ENCODE measurements at regions of chr5 and their contacts with region 1.

Region 1: DNA sequence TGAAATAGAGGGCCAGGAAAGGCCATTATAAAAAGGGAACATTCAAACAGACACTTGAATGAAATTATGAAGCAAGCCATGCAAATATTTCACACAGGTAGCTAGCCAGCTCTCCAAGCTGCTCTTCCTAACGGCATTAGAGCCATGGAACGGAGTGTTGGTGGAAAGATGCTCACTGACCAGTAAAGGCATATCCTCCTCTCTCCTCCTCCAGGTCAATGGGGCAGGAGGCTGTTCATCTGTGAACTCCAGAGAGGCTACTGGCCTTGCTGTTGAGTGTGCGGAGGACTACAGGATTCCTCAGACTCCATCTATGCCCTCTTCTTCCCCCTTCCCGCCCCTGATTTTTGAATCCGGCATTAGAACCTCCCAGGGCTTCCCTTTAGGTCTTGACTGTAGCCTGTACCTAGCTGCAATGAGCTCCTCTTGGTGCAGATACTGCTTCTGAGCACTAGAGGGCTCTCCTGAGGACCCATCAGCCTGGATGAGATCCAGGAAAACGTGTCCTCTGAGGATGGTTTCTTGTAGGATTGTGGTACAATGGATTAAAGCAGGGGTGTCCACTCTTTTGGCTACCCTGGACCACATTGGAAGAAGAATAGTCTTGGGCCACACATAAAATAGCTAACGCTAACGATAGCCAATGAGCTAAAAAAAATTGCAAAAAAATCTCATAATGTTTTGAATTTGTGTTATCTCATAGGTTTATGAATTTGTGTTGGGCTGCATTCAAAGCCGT is 162.2 kb downstream of the SREK1 start:
- DNase-seq: no peak
- H3K4me3 Mint-ChIP-seq: no peak overlapping the region
- H3K27ac Mint-ChIP-seq: no peak overlapping the region
- H3K4me1 Mint-ChIP-seq: peaks cover 5% of the 10 kb centered on the region
- H3K27me3 Mint-ChIP-seq: peaks cover 12% of the 10 kb centered on the region

Region 2: GRCh38 chr5:66477596-66477995 is 171.3 kb after region 1 on chr5:
- intact Hi-C with region 1: no loop called
- DNase-seq: no peak
- H3K4me3 Mint-ChIP-seq: no peak overlapping the region
- H3K27ac Mint-ChIP-seq: no peak overlapping the region
- H3K4me1 Mint-ChIP-seq: no peaks in the 10 kb centered on the region
- H3K27me3 Mint-ChIP-seq: peaks cover 14% of the 10 kb centered on the region

Region 3: DNA sequence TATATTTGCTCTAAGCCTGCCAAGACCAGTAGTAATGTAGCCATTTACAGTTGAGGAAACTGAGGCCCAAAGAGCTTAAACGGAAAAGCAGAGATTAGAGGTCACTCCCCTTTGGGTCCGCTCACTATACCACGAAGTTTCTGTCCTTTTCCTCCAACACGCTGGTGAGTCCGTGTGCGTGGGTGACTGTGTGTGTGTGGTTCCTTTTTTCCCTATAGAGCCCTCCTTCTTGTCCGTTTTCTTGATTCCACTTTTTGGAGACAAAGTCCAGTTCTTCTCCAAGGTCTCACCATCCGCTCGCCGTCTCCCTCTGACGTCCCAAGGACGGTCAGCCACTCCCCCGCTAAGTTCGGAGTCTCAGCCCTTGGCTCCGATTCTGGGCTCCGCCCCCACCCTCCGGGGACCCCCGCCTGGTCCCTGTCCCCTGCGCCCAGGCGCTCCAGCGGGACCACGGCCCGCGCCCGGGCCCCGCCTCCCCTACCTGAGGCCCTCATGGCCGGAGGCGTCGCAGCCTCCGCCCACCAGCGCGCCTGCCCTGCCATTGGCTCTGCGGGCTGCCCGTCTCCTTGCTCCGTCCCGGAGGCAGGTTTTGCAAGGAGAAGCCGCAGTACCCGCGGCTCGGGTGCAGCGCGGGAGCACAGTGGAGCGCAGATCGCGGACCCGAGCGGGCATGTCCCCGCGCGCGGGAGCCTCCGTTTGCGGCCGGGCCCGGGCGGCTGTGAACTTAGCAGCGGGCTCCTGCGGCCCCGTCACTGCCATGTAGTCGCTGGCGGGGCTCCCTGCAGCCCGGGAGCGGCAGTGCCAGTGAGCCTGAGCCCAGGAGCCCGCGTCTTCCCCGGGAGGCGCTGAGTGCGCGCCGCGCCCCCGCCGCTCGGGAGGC is 289.7 kb after region 1 on chr5 and contains the start of gene MAST4:
- intact Hi-C with region 1: loop called (anchors 5 kb)
- DNase-seq: peak; percentile 80
- H3K4me3 Mint-ChIP-seq: peak within 1 kb of the TSS; percentile 87
- H3K27ac Mint-ChIP-seq: peak within 1 kb of the TSS; percentile 56
- H3K4me1 Mint-ChIP-seq: peaks cover 34% of the 10 kb centered on the region
- H3K27me3 Mint-ChIP-seq: peaks cover 56% of the 10 kb centered on the region
- total RNA-seq, gene MAST4: 18.4 and 19.0 TPM in 2 replicates

Region 4: DNA sequence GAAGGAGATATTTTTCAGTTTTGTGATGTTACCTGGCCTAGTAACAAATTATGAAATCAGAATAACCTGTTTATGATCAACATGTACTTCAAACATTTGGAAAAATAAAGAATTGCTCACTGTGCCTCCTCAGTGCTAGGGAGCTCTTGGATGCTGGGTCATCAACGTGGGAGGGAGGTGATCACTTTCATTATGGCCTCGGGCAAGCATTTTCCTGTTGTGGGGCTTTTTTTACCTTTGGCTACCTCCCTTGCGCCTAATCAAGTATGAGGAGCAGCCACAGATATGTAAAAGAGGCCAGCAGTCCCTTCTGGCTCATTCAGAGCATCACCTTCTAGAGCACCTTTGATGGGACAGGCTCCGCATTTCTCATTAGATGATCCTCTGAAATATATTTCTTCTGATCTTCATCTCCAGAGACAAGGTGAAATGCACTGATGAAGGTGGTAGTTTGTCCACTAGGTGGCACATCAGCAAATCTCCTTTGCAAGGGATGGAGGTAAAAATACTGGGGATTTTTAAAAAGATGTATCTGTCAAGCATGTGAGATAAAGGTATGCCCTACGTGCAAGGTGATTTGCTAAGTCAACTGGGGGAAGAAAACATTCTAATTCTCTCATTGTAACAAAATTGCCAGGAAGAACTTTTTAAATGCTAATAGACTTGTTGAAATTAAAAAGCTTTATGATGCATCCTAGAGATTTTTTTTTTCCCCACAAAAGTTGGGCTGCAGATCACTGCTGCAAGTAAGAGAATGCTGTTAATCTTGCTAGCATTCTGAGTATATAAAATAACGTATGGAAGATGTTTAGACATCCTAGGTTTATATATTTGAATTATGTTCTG is 508.1 kb after region 1 on chr5:
- intact Hi-C with region 1: loop called (anchors 2 kb)
- DNase-seq: peak; percentile 47
- H3K4me3 Mint-ChIP-seq: peak overlapping the region; percentile 24
- H3K27ac Mint-ChIP-seq: no peak overlapping the region
- H3K4me1 Mint-ChIP-seq: peaks cover 78% of the 10 kb centered on the region
- H3K27me3 Mint-ChIP-seq: no peaks in the 10 kb centered on the region

Region 5: GRCh38 chr5:66945389-66946349 is 639.4 kb after region 1 on chr5:
- intact Hi-C with region 1: loop called (anchors 10 kb)
- DNase-seq: no peak
- H3K4me3 Mint-ChIP-seq: no peak overlapping the region
- H3K27ac Mint-ChIP-seq: no peak overlapping the region
- H3K4me1 Mint-ChIP-seq: peaks cover 24% of the 10 kb centered on the region
- H3K27me3 Mint-ChIP-seq: peaks cover 2% of the 10 kb centered on the region